ENCODE measurements at regions of chr2 and their contacts with region 1.

Region 1: DNA sequence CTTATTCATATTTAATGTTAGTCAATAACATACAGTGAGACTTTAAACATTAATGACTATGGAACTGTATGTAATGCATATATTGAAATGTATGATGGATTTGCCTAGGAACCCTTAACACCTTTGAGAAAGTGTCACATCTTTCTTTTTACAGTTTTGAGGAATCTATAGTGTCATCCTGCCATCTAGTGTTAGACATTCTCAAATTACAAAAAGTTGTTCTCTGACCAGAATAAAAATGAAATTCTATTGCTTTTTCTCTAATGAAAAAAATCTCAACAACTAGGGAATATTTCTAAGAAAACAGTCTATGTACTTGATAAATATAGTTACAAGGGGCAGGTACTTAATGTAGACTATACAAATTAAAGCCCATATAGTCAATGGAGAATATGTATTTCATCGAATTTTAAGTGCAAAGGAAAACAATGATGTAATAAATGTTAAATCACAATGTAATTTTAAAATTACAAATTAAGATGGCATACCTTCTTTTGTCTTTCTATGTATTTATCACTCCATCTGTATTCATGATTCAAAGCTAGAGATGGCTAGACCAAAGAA is 5.1 kb upstream of the CALCRL start:
- DNase-seq: peak; percentile 62
- H3K4me3 ChIP-seq: no peak overlapping the region
- H3K27ac ChIP-seq: no peak overlapping the region
- H3K4me1 ChIP-seq: peaks cover 4% of the 10 kb centered on the region
- H3K27me3 ChIP-seq: no peaks in the 10 kb centered on the region
- CTCF ChIP-seq: peak; percentile 59; the same call in 1 of the 2 replicates

Region 2: GRCh38 chr2:186503848-186504606 is 949.1 kb before region 1 on chr2:
- CTCF ChIA-PET with region 1: no interaction called
- POLR2A ChIA-PET with region 1: no interaction called
- intact Hi-C with region 1: loop called (anchors 10 kb)
- DNase-seq: peak; percentile 62
- H3K4me3 ChIP-seq: no peak overlapping the region
- H3K27ac ChIP-seq: no peak overlapping the region
- H3K4me1 ChIP-seq: no peaks in the 10 kb centered on the region
- H3K27me3 ChIP-seq: no peaks in the 10 kb centered on the region
- CTCF ChIP-seq: peak; percentile 71

Region 3: GRCh38 chr2:186862869-186863709 is 590.1 kb before region 1 on chr2:
- CTCF ChIA-PET with region 1: interaction called, 14 read pairs
- POLR2A ChIA-PET with region 1: interaction called, 7 read pairs
- intact Hi-C with region 1: loop called (anchors 2 kb)
- DNase-seq: peak; percentile 62
- H3K4me3 ChIP-seq: no peak overlapping the region
- H3K27ac ChIP-seq: no peak overlapping the region
- H3K4me1 ChIP-seq: no peaks in the 10 kb centered on the region
- H3K27me3 ChIP-seq: no peaks in the 10 kb centered on the region
- CTCF ChIP-seq: peak; percentile 79

Region 4: GRCh38 chr2:186903216-186903615 is 549.9 kb before region 1 on chr2:
- CTCF ChIA-PET with region 1: interaction called, 5 read pairs
- POLR2A ChIA-PET with region 1: no interaction called
- intact Hi-C with region 1: loop called (anchors 2 kb)
- DNase-seq: peak; percentile 33
- H3K4me3 ChIP-seq: no peak overlapping the region
- H3K27ac ChIP-seq: no peak overlapping the region
- H3K4me1 ChIP-seq: peaks cover 6% of the 10 kb centered on the region
- H3K27me3 ChIP-seq: no peaks in the 10 kb centered on the region
- CTCF ChIP-seq: peak; percentile 65

Region 5: DNA sequence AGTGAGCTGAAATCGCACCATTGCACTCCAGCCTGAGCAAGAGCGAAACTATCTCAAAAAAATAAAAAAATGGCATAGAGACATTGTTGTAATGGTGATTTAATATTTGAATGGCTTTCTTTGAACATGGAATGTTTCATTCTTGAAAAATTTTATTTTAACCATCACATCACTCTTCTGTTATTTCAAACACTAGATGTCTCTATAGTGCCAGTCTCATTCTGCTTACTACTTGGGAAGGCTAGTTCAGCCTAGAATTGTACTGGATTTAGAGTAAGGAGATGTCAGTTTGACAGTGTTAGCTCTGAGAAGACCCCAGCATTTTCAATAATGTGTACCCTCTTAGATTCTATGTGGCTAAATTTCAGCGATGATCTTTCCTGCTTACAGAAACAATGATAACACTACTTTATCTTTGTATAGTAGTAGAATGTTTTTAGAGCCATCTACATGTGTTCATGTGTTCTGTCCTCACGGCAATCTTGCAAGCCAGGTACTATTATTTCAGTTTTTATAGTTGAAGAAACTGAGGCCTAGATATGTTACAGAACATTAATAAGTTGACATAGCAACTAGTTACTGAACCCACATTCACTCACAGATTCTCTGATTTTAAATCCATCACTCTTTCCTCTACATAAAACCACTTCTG is 461.3 kb before region 1 on chr2:
- CTCF ChIA-PET with region 1: no interaction called
- POLR2A ChIA-PET with region 1: no interaction called
- intact Hi-C with region 1: loop called (anchors 5 kb)
- DNase-seq: no peak
- H3K4me3 ChIP-seq: no peak overlapping the region
- H3K27ac ChIP-seq: no peak overlapping the region
- H3K4me1 ChIP-seq: no peaks in the 10 kb centered on the region
- H3K27me3 ChIP-seq: no peaks in the 10 kb centered on the region
- CTCF ChIP-seq: peak; percentile 50

Region 6: GRCh38 chr2:187138265-187138664 is 314.9 kb before region 1 on chr2:
- CTCF ChIA-PET with region 1: interaction called, 3 read pairs
- POLR2A ChIA-PET with region 1: no interaction called
- intact Hi-C with region 1: loop called (anchors 5 kb)
- DNase-seq: peak; percentile 47
- H3K4me3 ChIP-seq: no peak overlapping the region
- H3K27ac ChIP-seq: no peak overlapping the region
- H3K4me1 ChIP-seq: peaks cover 10% of the 10 kb centered on the region
- H3K27me3 ChIP-seq: peaks cover 4% of the 10 kb centered on the region
- CTCF ChIP-seq: peak; percentile 62

Region 7: DNA sequence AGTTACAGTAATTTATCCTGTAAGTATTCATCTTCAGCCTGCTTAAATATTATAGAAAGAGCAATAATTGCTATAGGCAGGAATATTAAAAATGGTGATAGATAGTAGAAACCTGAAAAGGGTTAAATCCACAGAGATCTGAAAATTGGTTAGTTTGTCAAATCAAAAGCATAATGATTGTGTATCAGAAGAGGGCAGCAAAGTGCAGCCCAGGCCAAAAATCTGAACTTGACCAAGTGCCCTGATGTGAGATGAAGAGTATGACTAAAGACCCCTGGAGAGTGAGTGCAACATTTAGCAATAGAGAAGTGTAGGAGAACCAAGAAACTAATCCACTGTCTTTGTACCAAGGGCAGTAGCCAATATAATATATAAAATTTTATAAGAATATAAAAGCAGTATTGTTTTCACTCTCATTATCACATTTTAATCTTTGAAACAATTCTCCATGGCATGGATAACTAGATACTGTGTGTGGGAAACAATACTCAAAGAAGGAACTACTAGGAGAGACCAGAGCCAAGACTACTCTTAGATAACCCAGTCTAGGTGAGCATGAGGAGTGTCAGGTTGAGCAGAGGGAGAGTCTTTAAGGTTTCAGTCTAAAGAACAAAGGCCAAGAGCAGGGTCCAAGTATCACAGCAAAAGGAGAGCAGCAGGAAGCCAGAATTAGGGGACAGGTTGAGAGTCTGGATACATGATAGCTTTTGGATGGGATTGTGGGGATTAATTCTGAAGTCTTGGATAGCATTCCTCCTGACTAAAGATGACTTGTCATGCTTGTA is 153.8 kb before region 1 on chr2:
- CTCF ChIA-PET with region 1: interaction called, 5 read pairs
- POLR2A ChIA-PET with region 1: no interaction called
- intact Hi-C with region 1: loop called (anchors 2 kb)
- DNase-seq: peak; percentile 50
- H3K4me3 ChIP-seq: no peak overlapping the region
- H3K27ac ChIP-seq: no peak overlapping the region
- H3K4me1 ChIP-seq: peaks cover 27% of the 10 kb centered on the region
- H3K27me3 ChIP-seq: no peaks in the 10 kb centered on the region
- CTCF ChIP-seq: peak; percentile 39

Measured in A673 (cell line).